Activated CD4-positive, alpha-beta T cell treated with anti-CD3 and anti-CD28 coated beads, Interleukin-2, amount 10 ng/mL, durations not matched to agents 24 days and 14 days (primary cell): ENCODE measurements at regions of chr6 and their contacts with region 1.

Region 1: GRCh38 chr6:96468681-96469224 is 52.9 kb upstream of the UFL1 start:
- DNase-seq: no peak
- H3K4me3 Mint-ChIP-seq: no peak overlapping the region
- H3K27ac Mint-ChIP-seq: no peak overlapping the region
- H3K4me1 Mint-ChIP-seq: peaks cover 14% of the 10 kb centered on the region
- H3K27me3 Mint-ChIP-seq: peaks cover 11% of the 10 kb centered on the region

Region 2: DNA sequence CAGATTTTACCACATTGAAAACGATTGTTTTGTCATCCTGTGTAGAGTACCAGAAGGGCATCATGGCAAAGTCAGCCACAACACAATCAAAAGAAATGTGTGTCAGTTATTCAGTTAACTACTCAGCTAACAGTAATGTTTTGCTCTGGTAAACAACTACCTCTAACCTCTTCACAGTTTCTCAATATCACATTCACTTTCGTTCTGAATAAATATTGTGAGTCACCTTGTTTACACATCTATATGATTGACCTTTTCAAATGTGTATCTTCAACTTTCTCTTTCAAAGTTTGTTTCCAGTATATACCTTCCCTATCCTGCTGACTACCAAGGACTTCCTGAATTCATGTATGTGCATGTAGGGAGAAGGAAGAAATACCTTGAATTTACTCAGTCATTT is 163.8 kb before region 1 on chr6:
- intact Hi-C with region 1: loop called (anchors 2 kb)
- DNase-seq: no peak
- H3K4me3 Mint-ChIP-seq: no peak overlapping the region
- H3K27ac Mint-ChIP-seq: no peak overlapping the region
- H3K4me1 Mint-ChIP-seq: peaks cover 3% of the 10 kb centered on the region
- H3K27me3 Mint-ChIP-seq: no peaks in the 10 kb centered on the region